CD8-positive, alpha-beta T cell (primary cell): ENCODE measurements at regions of chr12 and their contacts with region 1.

Region 1: DNA sequence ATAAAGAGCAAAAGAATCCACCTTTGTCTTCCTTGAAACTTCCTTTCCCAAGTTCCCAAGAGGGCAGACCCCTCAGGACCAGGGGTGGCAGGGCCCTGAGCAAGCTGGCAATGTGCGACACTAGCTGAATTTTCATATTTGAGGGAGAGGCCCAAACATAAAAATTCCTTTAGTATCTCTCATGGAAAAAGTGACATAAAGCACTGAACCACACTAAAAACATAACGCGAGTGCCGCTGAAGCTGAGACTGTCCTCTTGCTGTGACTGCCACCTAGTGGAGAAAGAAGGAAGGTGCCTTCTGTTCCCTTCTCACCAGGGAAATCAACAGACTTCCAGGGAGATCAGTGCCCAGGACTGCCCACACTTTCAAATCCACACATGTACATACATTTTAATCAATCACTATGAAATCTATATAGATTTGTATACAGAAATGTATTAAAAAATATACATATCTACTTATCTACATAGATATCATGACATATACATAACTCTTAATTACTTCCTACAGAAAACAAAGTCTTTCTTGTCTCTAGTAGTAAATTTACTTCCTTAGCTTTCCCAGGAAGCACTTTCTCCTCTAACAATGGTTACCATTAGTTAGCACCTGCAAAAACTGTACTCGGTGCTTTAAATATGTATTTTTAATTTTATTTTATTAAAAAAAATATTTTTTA is 53.8 kb downstream of the SSH1 start:
- DNase-seq: peak; percentile 44 to 84 (median 68)
- ATAC-seq: peak; percentile 95
- H3K4me3 ChIP-seq: no peak overlapping the region
- H3K4me3 Mint-ChIP-seq: no peak overlapping the region
- H3K27ac ChIP-seq: no peak overlapping the region
- H3K27ac Mint-ChIP-seq: peak overlapping the region; percentile 14
- H3K4me1 ChIP-seq: no peaks in the 10 kb centered on the region
- H3K4me1 Mint-ChIP-seq: peaks cover 4% of the 10 kb centered on the region
- H3K27me3 ChIP-seq: no peaks in the 10 kb centered on the region
- H3K27me3 Mint-ChIP-seq: no peaks in the 10 kb centered on the region
- CTCF ChIP-seq: peak; percentile 94

Region 2: GRCh38 chr12:108570743-108571608 is 232.6 kb before region 1 on chr12:
- CTCF ChIA-PET with region 1: interaction called, 131 read pairs
- POLR2A ChIA-PET with region 1: no interaction called
- intact Hi-C with region 1: loop called in 1 of 2 experiments (anchors 1 kb)
- DNase-seq: peak in 3 of 9 experiments; percentile 23 to 54 (median 47)
- ATAC-seq: no peak
- H3K4me3 ChIP-seq: no peak overlapping the region
- H3K4me3 Mint-ChIP-seq: no peak overlapping the region
- H3K27ac ChIP-seq: peak overlapping the region in 1 of 2 experiments; percentile 5
- H3K27ac Mint-ChIP-seq: peak overlapping the region; percentile 97
- H3K4me1 ChIP-seq: peaks cover 53% of the 10 kb centered on the region
- H3K4me1 Mint-ChIP-seq: peaks cover 89% of the 10 kb centered on the region
- H3K27me3 ChIP-seq: no peaks in the 10 kb centered on the region
- H3K27me3 Mint-ChIP-seq: no peaks in the 10 kb centered on the region
- CTCF ChIP-seq: no peak

Region 3: GRCh38 chr12:108633534-108634248 is 169.9 kb before region 1 on chr12 and contains the start of gene SELPLG:
- CTCF ChIA-PET with region 1: interaction called, 23 read pairs
- POLR2A ChIA-PET with region 1: interaction called, 4 read pairs
- intact Hi-C with region 1: loop called in 1 of 2 experiments (anchors 1 kb)
- DNase-seq: peak; percentile 77 to 97 (median 88)
- ATAC-seq: peak; percentile 60
- H3K4me3 ChIP-seq: peak within 1 kb of the TSS; percentile 71 to 95
- H3K4me3 Mint-ChIP-seq: peak within 1 kb of the TSS; percentile 100
- H3K27ac ChIP-seq: peak within 1 kb of the TSS; percentile 91 to 92
- H3K27ac Mint-ChIP-seq: peak within 1 kb of the TSS; percentile 100
- H3K4me1 ChIP-seq: peaks cover 73% of the 10 kb centered on the region
- H3K4me1 Mint-ChIP-seq: peaks cover 71% of the 10 kb centered on the region
- H3K27me3 ChIP-seq: no peaks in the 10 kb centered on the region
- H3K27me3 Mint-ChIP-seq: no peaks in the 10 kb centered on the region
- CTCF ChIP-seq: peak; percentile 23
- total RNA-seq, gene SELPLG: 30.4 to 32.3 TPM

Region 4: GRCh38 chr12:108731105-108731865 is 72.3 kb before region 1 on chr12 and contains the start of gene CORO1C:
- CTCF ChIA-PET with region 1: interaction called, 8 read pairs
- POLR2A ChIA-PET with region 1: no interaction called
- intact Hi-C with region 1: loop called in 1 of 2 experiments (anchors 5 kb)
- DNase-seq: peak; percentile 86 to 97 (median 92)
- ATAC-seq: peak; percentile 75
- H3K4me3 ChIP-seq: peak within 1 kb of the TSS; percentile 91 to 93
- H3K4me3 Mint-ChIP-seq: peak within 1 kb of the TSS; percentile 94
- H3K27ac ChIP-seq: peak within 1 kb of the TSS; percentile 67 to 85
- H3K27ac Mint-ChIP-seq: peak within 1 kb of the TSS; percentile 86
- H3K4me1 ChIP-seq: peaks cover 7% of the 10 kb centered on the region
- H3K4me1 Mint-ChIP-seq: peaks cover 26% of the 10 kb centered on the region
- H3K27me3 ChIP-seq: no peaks in the 10 kb centered on the region
- H3K27me3 Mint-ChIP-seq: no peaks in the 10 kb centered on the region
- CTCF ChIP-seq: peak; percentile 74
- total RNA-seq, gene CORO1C: 10.3 to 15.4 TPM

Region 5: DNA sequence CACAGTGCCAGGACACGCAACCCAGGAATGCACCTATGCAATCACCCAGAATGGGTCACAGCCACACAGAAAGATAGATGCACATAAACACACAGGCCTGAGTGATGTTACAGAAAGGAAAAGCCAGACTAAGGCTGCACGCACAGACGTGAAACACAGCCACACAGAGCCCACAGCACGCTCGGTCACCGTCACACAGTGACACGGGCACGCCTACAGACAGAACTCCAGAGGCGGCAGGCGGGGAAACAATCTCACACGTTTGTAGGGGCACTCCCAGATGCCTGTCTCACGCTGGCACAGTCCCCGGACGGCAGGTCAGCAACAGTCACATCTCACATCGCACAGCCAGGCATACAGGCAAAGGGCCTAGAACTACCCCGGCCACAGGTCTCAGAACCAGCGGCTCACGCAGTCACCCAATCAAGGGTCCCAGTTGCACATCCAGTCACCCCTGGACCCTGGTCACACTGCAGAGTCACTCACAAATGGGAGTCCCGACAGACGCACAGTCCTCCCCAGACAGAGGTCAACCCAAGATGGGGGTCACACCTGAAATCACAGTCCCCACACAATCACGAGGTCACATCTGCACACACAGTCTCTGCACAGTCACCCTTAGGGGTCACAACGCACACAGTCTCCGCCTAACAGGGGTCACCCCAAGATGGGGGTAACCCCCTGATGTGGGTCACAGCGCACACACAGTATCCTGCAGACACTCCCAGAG is 53.0 kb after region 1 on chr12:
- CTCF ChIA-PET with region 1: interaction called, 3 read pairs
- POLR2A ChIA-PET with region 1: no interaction called
- intact Hi-C with region 1: loop called in 1 of 2 experiments (anchors 5 kb)
- DNase-seq: peak; percentile 27 to 92 (median 64)
- ATAC-seq: peak; percentile 70
- H3K4me3 ChIP-seq: peak overlapping the region; percentile 58 to 71
- H3K4me3 Mint-ChIP-seq: peak overlapping the region; percentile 98
- H3K27ac ChIP-seq: peak overlapping the region; percentile 54 to 77
- H3K27ac Mint-ChIP-seq: peak overlapping the region; percentile 97
- H3K4me1 ChIP-seq: peaks cover 27% of the 10 kb centered on the region
- H3K4me1 Mint-ChIP-seq: peaks cover 46% of the 10 kb centered on the region
- H3K27me3 ChIP-seq: peaks cover 0 to 2% of the 10 kb centered on the region in 2 experiments
- H3K27me3 Mint-ChIP-seq: no peaks in the 10 kb centered on the region
- CTCF ChIP-seq: no peak